CD4-positive, alpha-beta T cell (primary cell): ENCODE measurements at regions of chr6 and their contacts with region 1.

Region 1: GRCh38 chr6:160520043-160520904 is 143.8 kb downstream of the LPA start:
- DNase-seq: peak; percentile 32 to 84 (median 67)
- ATAC-seq: peak; percentile 79
- H3K4me3 ChIP-seq: peak overlapping the region; percentile 83
- H3K4me3 Mint-ChIP-seq: peak overlapping the region; percentile 98
- H3K27ac ChIP-seq: peak overlapping the region; percentile 39 to 69
- H3K27ac Mint-ChIP-seq: peak overlapping the region; percentile 85
- H3K4me1 ChIP-seq: peaks cover 16% of the 10 kb centered on the region
- H3K4me1 Mint-ChIP-seq: peaks cover 34% of the 10 kb centered on the region
- H3K27me3 ChIP-seq: no peaks in the 10 kb centered on the region
- H3K27me3 Mint-ChIP-seq: no peaks in the 10 kb centered on the region
- CTCF ChIP-seq: peak; percentile 62

Region 2: GRCh38 chr6:159968440-159969203 is 551.7 kb before region 1 on chr6 and contains the start of gene IGF2R:
- CTCF ChIA-PET with region 1: no interaction called
- POLR2A ChIA-PET with region 1: no interaction called
- intact Hi-C with region 1: loop called in 1 of 2 experiments (anchors 10 kb)
- DNase-seq: peak; percentile 86 to 97 (median 94)
- ATAC-seq: peak; percentile 89
- H3K4me3 ChIP-seq: peak within 1 kb of the TSS; percentile 76
- H3K4me3 Mint-ChIP-seq: peak within 1 kb of the TSS; percentile 98
- H3K27ac ChIP-seq: peak within 1 kb of the TSS; percentile 31 to 42
- H3K27ac Mint-ChIP-seq: peak within 1 kb of the TSS; percentile 91
- H3K4me1 ChIP-seq: peaks cover 41% of the 10 kb centered on the region
- H3K4me1 Mint-ChIP-seq: peaks cover 45% of the 10 kb centered on the region
- H3K27me3 ChIP-seq: no peaks in the 10 kb centered on the region
- H3K27me3 Mint-ChIP-seq: no peaks in the 10 kb centered on the region
- CTCF ChIP-seq: no peak
- total RNA-seq, gene IGF2R: 43.8 to 46.7 TPM

Region 3: GRCh38 chr6:160462551-160463109 is 57.6 kb before region 1 on chr6:
- CTCF ChIA-PET with region 1: interaction called, 6 read pairs
- POLR2A ChIA-PET with region 1: interaction called, 8 read pairs
- intact Hi-C with region 1: loop called (anchors 5 kb)
- DNase-seq: peak in 10 of 14 experiments; percentile 18 to 95 (median 54)
- ATAC-seq: peak; percentile 89
- H3K4me3 ChIP-seq: peak overlapping the region; percentile 19
- H3K4me3 Mint-ChIP-seq: peak overlapping the region; percentile 68
- H3K27ac ChIP-seq: no peak overlapping the region
- H3K27ac Mint-ChIP-seq: peak overlapping the region; percentile 66
- H3K4me1 ChIP-seq: peaks cover 66% of the 10 kb centered on the region
- H3K4me1 Mint-ChIP-seq: peaks cover 82% of the 10 kb centered on the region
- H3K27me3 ChIP-seq: no peaks in the 10 kb centered on the region
- H3K27me3 Mint-ChIP-seq: peaks cover 17% of the 10 kb centered on the region
- CTCF ChIP-seq: no peak

Region 4: GRCh38 chr6:160534050-160534696 is 13.9 kb after region 1 on chr6:
- CTCF ChIA-PET with region 1: interaction called, 29 read pairs
- POLR2A ChIA-PET with region 1: no interaction called
- intact Hi-C with region 1: loop called in 1 of 2 experiments (anchors 1 kb)
- DNase-seq: peak; percentile 32 to 75 (median 51)
- ATAC-seq: peak; percentile 64
- H3K4me3 ChIP-seq: peak overlapping the region; percentile 6
- H3K4me3 Mint-ChIP-seq: no peak overlapping the region
- H3K27ac ChIP-seq: no peak overlapping the region
- H3K27ac Mint-ChIP-seq: no peak overlapping the region
- H3K4me1 ChIP-seq: peaks cover 9% of the 10 kb centered on the region
- H3K4me1 Mint-ChIP-seq: no peaks in the 10 kb centered on the region
- H3K27me3 ChIP-seq: no peaks in the 10 kb centered on the region
- H3K27me3 Mint-ChIP-seq: peaks cover 7% of the 10 kb centered on the region
- CTCF ChIP-seq: peak; percentile 96

Region 5: DNA sequence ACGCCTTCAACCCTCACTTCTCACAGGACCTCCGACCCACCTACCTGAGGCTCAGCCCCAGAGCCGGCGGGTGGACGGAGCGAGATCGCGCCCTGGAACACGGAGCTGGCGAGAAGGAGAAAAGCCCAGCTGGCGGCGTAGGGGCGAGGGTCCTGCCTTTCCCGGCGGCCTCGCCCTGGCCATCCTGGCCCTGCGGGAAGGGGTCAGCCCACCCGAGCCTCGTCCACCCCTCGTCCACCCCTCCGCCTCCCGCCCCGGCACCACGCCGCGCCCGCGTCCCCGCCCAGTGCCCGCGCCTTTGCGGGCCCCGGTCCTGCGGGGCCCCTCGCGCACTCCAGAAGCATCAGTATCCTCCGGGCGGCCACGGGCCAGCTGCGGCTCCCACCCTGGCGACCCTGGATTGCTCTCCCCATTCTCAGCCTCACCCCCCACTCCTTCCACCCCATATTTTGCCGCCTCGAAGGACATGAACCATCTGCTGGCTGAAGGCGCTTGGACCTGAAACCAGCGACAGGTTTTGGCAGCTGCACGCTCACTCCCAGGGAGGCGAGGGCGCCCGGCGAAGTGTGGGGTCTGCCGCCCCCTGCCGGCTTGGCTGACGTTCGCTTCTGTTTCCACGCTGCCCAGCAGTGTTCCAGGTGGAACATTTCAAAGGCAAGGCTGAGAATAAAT is 246.9 kb after region 1 on chr6:
- CTCF ChIA-PET with region 1: no interaction called
- POLR2A ChIA-PET with region 1: no interaction called
- intact Hi-C with region 1: loop called in 1 of 2 experiments (anchors 5 kb)
- DNase-seq: peak in 13 of 14 experiments; percentile 14 to 54 (median 35)
- ATAC-seq: peak; percentile 48
- H3K4me3 ChIP-seq: peak overlapping the region; percentile 34
- H3K4me3 Mint-ChIP-seq: peak overlapping the region; percentile 37
- H3K27ac ChIP-seq: no peak overlapping the region
- H3K27ac Mint-ChIP-seq: no peak overlapping the region
- H3K4me1 ChIP-seq: no peaks in the 10 kb centered on the region
- H3K4me1 Mint-ChIP-seq: no peaks in the 10 kb centered on the region
- H3K27me3 ChIP-seq: peaks cover 13 to 32% of the 10 kb centered on the region in 2 experiments
- H3K27me3 Mint-ChIP-seq: peaks cover 62% of the 10 kb centered on the region
- CTCF ChIP-seq: peak; percentile 37

Region 6: DNA sequence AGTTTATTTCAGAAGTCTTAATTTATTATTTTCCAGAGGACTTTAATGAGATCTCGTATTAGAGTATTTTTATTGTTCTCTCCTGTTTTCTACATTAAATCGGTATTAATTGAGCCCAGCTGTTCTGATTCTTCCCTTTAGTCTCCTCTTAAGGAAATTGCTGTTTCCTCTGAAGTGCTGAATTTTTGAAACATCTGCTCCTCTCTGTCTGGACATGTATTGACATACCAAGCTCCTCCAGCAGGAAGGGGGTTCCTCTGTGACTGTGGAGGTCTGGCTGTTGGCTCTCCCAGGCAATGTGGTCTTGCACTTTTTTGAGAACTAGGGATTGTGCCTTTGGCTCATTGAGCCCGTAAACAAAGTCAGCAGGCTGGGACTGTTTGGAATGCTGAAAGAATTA is 546.2 kb after region 1 on chr6:
- CTCF ChIA-PET with region 1: no interaction called
- POLR2A ChIA-PET with region 1: no interaction called
- intact Hi-C with region 1: loop called in 1 of 2 experiments (anchors 5 kb)
- DNase-seq: no peak
- ATAC-seq: no peak
- H3K4me3 ChIP-seq: no peak overlapping the region
- H3K4me3 Mint-ChIP-seq: no peak overlapping the region
- H3K27ac ChIP-seq: no peak overlapping the region
- H3K27ac Mint-ChIP-seq: no peak overlapping the region
- H3K4me1 ChIP-seq: peaks cover 5% of the 10 kb centered on the region
- H3K4me1 Mint-ChIP-seq: peaks cover 30% of the 10 kb centered on the region
- H3K27me3 ChIP-seq: no peaks in the 10 kb centered on the region
- H3K27me3 Mint-ChIP-seq: no peaks in the 10 kb centered on the region
- CTCF ChIP-seq: no peak

Region 7: DNA sequence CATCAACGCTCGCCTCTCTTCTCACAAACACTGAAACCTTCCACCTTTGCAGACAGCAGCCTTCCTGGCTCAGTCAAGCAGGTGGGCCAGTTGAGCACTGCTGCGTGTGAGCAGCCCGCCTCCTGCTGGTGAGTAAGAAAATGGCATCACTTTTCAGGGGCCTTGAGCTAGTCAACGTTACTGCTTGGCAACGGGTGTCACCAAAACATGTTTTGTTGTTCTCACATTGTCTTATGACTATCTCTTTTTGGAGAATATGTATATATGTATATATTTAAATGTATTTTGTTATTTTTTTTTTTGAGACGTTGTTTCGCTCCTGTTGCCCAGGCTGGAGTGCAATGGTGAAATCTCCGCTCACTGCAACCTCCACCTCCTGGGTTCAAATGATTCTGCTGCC is 850.6 kb after region 1 on chr6:
- CTCF ChIA-PET with region 1: no interaction called
- POLR2A ChIA-PET with region 1: no interaction called
- intact Hi-C with region 1: loop called in 1 of 2 experiments (anchors 5 kb)
- DNase-seq: peak; percentile 43 to 84 (median 61)
- ATAC-seq: peak; percentile 90
- H3K4me3 ChIP-seq: no peak overlapping the region
- H3K4me3 Mint-ChIP-seq: no peak overlapping the region
- H3K27ac ChIP-seq: no peak overlapping the region
- H3K27ac Mint-ChIP-seq: no peak overlapping the region
- H3K4me1 ChIP-seq: peaks cover 5% of the 10 kb centered on the region
- H3K4me1 Mint-ChIP-seq: no peaks in the 10 kb centered on the region
- H3K27me3 ChIP-seq: no peaks in the 10 kb centered on the region
- H3K27me3 Mint-ChIP-seq: no peaks in the 10 kb centered on the region
- CTCF ChIP-seq: peak; percentile 92